ENCODE measurements at regions of chrX and their contacts with region 1.

Region 1: DNA sequence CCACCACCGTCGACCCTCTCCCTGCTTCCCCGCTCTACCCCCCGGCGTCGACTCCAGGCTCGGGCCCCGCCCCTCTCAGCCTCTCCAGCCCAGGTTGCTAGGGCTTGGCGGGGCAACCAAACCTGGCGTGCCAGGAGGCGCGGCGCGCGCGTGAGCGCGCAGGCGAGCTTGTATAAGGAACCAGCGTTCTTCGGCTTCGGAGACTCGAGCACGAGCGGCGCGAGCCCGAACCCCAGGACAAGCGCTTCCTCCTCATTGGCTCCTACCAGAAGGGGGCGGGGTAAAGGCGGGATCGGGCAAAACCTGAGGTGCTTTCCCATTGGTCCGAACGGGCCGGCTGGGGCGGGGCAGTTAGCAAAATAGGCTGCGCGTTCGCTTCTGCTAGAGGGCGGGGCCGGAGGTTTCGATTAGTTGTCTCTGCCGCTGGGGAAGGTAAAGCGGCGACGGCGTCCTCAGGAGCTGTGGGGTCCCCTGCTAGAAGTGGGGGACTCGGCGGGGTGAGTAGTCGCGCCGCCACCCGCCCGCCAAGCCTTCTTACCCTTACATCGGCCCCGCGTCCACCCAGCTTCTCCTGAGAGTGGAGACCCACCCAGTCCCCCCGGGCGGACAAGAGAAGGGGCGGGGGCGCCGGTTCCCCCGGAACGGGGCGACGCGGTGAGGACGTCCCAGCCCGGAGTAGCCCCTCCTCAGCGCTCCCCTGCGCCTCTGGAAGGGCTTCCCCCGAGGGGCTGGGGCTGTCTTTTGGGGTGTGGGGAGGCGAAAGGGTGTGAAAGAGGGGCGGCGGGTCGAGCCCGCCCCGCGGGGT is at the start of gene CDKL5:
- DNase-seq: peak; percentile 96
- ATAC-seq: peak; percentile 85
- H3K4me3 ChIP-seq: peak within 1 kb of the TSS; percentile 91
- H3K27ac ChIP-seq: no peak within 1 kb of the TSS
- H3K4me1 ChIP-seq: peaks cover 9% of the 10 kb centered on the region
- H3K27me3 ChIP-seq: no peaks in the 10 kb centered on the region
- CTCF ChIP-seq: no peak
- total RNA-seq, gene CDKL5: 2.4 and 2.9 TPM in 2 replicates

Region 2: DNA sequence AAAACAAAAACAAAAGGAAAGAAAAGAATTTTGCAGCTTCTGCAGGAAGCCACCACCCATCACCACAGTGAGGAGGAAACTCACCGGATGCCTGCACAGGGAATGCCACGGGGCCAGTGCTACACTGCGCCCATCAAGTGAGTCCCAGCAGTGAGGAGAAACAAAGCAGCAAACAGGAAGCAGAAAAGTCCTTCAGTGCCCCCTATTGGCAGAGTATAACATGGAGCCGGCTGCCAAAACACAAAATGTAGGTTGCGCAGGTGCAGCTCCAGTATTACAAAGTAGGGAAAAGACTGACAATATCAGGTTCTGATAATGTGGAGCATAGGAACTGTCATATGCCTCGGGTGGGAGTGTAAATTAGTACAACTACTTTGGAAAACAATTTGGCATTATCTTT is 47.6 kb before region 1 on chrX:
- CTCF ChIA-PET with region 1: no interaction called
- POLR2A ChIA-PET with region 1: no interaction called
- intact Hi-C with region 1: no loop called
- DNase-seq: peak; percentile 54
- ATAC-seq: peak; percentile 80
- H3K4me3 ChIP-seq: no peak overlapping the region
- H3K27ac ChIP-seq: no peak overlapping the region
- H3K4me1 ChIP-seq: no peaks in the 10 kb centered on the region
- H3K27me3 ChIP-seq: no peaks in the 10 kb centered on the region
- CTCF ChIP-seq: peak; percentile 71

Region 3: DNA sequence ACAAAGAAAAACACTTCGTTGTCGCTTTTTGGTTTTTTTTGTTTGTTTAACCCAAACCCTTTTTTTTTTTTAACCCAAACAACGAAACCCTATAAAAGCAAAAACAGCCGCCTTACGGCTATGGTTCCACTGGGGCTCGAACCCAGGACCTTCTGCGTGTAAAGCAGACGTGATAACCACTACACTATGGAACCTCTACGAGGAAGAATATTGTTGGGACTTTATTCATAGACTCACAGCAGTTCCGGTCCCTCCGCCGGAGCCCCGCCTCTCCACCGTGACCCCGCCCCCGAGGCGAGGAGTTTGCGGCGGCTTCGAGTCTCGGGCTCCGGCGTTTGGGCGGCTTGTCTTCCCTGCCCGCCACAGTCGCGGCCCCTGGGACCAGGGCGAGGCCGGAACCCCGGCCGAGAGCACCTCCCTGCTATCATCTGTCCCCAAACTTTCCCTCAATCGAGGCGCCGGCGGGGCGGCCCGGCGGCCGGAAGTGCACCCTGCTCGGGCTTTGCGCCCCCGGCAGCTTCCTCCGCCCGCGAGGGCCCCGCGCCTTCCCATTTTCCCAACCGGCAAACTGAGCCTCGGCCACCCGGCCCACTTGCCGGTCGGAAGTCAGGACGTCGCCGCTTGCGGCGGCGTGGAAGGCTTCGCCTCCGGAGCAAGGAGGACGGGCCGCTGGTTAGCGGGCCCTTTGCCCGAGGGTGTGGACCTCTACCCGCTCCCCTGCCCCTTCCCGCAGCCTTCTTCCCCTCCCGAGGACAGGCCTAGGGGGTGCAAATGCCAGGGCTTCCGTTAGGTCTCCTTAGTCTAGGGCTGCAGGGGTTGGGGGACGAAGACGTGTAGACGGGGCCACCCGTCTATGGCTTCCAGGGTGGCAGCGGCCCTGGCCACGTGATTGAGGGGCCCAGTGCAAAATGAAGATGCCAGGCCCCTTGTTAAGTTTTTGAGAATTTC is 249.7 kb after region 1 on chrX:
- CTCF ChIA-PET with region 1: no interaction called
- POLR2A ChIA-PET with region 1: no interaction called
- intact Hi-C with region 1: loop called (anchors 1 kb)
- DNase-seq: peak; percentile 86
- ATAC-seq: peak; percentile 82
- H3K4me3 ChIP-seq: peak overlapping the region; percentile 91
- H3K27ac ChIP-seq: peak overlapping the region; percentile 30; the same call in 1 of the 2 replicates
- H3K4me1 ChIP-seq: peaks cover 4% of the 10 kb centered on the region; the same call in 1 of the 2 replicates
- H3K27me3 ChIP-seq: no peaks in the 10 kb centered on the region
- CTCF ChIP-seq: no peak

Region 4: GRCh38 chrX:18702362-18703195 is 277.2 kb after region 1 on chrX:
- CTCF ChIA-PET with region 1: no interaction called
- POLR2A ChIA-PET with region 1: no interaction called
- intact Hi-C with region 1: loop called (anchors 10 kb)
- DNase-seq: peak; percentile 80
- ATAC-seq: peak; percentile 80
- H3K4me3 ChIP-seq: peak overlapping the region; percentile 60
- H3K27ac ChIP-seq: peak overlapping the region; percentile 99
- H3K4me1 ChIP-seq: peaks cover 21% of the 10 kb centered on the region
- H3K27me3 ChIP-seq: no peaks in the 10 kb centered on the region
- CTCF ChIP-seq: no peak

Measured in PC-3 (cell line).